B cell (primary cell): ENCODE measurements at regions of chr1 and their contacts with region 1.

Region 1: GRCh38 chr1:147627435-147628110 is 42.8 kb downstream of the ACP6 start:
- DNase-seq: peak; percentile 67
- ATAC-seq: peak; percentile 75
- H3K4me3 ChIP-seq: no peak overlapping the region
- H3K4me3 Mint-ChIP-seq: no peak overlapping the region
- H3K27ac ChIP-seq: no peak overlapping the region
- H3K27ac Mint-ChIP-seq: no peak overlapping the region
- H3K4me1 ChIP-seq: peaks cover 7% of the 10 kb centered on the region in 2 donors
- H3K4me1 Mint-ChIP-seq: peaks cover 11% of the 10 kb centered on the region
- H3K27me3 ChIP-seq: no peaks in the 10 kb centered on the region
- H3K27me3 Mint-ChIP-seq: no peaks in the 10 kb centered on the region
- CTCF ChIP-seq: peak; percentile 97

Region 2: DNA sequence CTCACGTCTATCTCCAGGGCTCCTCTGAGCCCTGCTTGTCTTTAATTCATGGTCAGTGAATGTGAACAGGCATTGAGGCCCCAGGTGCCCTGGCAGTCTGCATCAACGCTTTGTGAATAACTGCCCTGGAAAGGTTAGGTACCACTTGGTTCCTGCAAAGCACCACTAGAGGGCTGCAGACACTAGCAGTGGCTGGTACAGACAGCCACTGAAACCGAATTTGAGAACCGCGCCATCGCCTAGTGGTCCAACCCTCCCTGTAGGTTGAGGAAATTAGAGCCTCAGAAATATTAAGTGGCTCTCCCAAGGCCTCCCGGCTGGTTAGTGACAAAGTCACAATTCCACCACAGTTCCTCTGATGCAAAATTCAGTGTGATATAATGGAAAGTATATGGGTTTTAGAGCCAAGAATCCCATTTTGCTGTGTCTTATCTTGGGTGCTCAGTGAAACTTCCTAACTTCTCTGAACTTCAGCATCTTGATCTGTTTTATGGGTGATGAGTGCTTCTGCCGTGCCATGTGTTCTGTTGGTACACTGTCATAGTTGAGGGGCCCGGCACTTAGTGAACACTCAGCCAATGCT is 132.5 kb before region 1 on chr1:
- CTCF ChIA-PET with region 1: interaction called, 21 read pairs
- POLR2A ChIA-PET with region 1: no interaction called
- intact Hi-C with region 1: loop called (anchors 1 kb)
- DNase-seq: peak; percentile 75
- ATAC-seq: peak; percentile 82
- H3K4me3 ChIP-seq: no peak overlapping the region
- H3K4me3 Mint-ChIP-seq: no peak overlapping the region
- H3K27ac ChIP-seq: no peak overlapping the region
- H3K27ac Mint-ChIP-seq: no peak overlapping the region
- H3K4me1 ChIP-seq: peaks cover 0 to 3% of the 10 kb centered on the region in 2 donors
- H3K4me1 Mint-ChIP-seq: no peaks in the 10 kb centered on the region
- H3K27me3 ChIP-seq: peaks cover 0 to 6% (median 3%) of the 10 kb centered on the region in 4 experiments
- H3K27me3 Mint-ChIP-seq: peaks cover 24% of the 10 kb centered on the region
- CTCF ChIP-seq: peak; percentile 92

Region 3: DNA sequence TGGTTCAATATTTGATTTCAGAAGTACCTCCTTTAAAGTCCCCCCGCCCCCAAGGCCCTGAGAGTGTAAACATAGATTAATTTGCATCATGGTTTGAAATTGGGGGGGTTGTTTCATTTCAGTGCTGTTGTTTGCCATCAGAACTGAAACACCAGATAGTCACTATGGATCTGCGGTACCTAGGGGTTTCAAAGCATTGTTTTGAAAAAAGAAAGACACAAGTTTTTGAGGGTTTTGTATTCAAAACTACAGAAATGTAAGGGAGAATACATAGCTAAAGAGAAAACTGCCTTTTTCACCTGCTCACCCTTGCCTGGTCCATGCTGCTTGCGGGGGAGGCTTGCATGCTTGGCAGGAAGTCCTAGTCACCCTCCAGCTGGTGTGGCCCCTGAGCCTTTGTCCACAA is 16.5 kb before region 1 on chr1:
- CTCF ChIA-PET with region 1: interaction called, 11 read pairs
- POLR2A ChIA-PET with region 1: no interaction called
- intact Hi-C with region 1: no loop called
- DNase-seq: no peak
- ATAC-seq: no peak
- H3K4me3 ChIP-seq: no peak overlapping the region
- H3K4me3 Mint-ChIP-seq: no peak overlapping the region
- H3K27ac ChIP-seq: no peak overlapping the region
- H3K27ac Mint-ChIP-seq: no peak overlapping the region
- H3K4me1 ChIP-seq: no peaks in the 10 kb centered on the region
- H3K4me1 Mint-ChIP-seq: peaks cover 5% of the 10 kb centered on the region
- H3K27me3 ChIP-seq: no peaks in the 10 kb centered on the region
- H3K27me3 Mint-ChIP-seq: no peaks in the 10 kb centered on the region
- CTCF ChIP-seq: no peak

Region 4: GRCh38 chr1:147781056-147781471 is 153.5 kb after region 1 on chr1:
- CTCF ChIA-PET with region 1: no interaction called
- POLR2A ChIA-PET with region 1: no interaction called
- intact Hi-C with region 1: loop called (anchors 10 kb)
- DNase-seq: no peak
- ATAC-seq: no peak
- H3K4me3 ChIP-seq: no peak overlapping the region
- H3K4me3 Mint-ChIP-seq: no peak overlapping the region
- H3K27ac ChIP-seq: no peak overlapping the region
- H3K27ac Mint-ChIP-seq: no peak overlapping the region
- H3K4me1 ChIP-seq: no peaks in the 10 kb centered on the region
- H3K4me1 Mint-ChIP-seq: no peaks in the 10 kb centered on the region
- H3K27me3 ChIP-seq: peaks cover 0 to 16% (median 15%) of the 10 kb centered on the region in 4 experiments
- H3K27me3 Mint-ChIP-seq: peaks cover 60% of the 10 kb centered on the region
- CTCF ChIP-seq: no peak